Activated CD4-positive, alpha-beta memory T cell treated with anti-CD3 and anti-CD28 coated beads, Interleukin-2, amount 10 ng/mL, durations not matched to agents 7 days and 5 days (primary cell): ENCODE measurements at regions of chr17 and their contacts with region 1.

Region 1: GRCh38 chr17:45640141-45640850 is 143.8 kb upstream of the CRHR1 start:
- DNase-seq: peak; percentile 76
- H3K4me3 Mint-ChIP-seq: no peak overlapping the region
- H3K27ac Mint-ChIP-seq: no peak overlapping the region
- H3K4me1 Mint-ChIP-seq: peaks cover 11% of the 10 kb centered on the region
- H3K27me3 Mint-ChIP-seq: no peaks in the 10 kb centered on the region

Region 2: DNA sequence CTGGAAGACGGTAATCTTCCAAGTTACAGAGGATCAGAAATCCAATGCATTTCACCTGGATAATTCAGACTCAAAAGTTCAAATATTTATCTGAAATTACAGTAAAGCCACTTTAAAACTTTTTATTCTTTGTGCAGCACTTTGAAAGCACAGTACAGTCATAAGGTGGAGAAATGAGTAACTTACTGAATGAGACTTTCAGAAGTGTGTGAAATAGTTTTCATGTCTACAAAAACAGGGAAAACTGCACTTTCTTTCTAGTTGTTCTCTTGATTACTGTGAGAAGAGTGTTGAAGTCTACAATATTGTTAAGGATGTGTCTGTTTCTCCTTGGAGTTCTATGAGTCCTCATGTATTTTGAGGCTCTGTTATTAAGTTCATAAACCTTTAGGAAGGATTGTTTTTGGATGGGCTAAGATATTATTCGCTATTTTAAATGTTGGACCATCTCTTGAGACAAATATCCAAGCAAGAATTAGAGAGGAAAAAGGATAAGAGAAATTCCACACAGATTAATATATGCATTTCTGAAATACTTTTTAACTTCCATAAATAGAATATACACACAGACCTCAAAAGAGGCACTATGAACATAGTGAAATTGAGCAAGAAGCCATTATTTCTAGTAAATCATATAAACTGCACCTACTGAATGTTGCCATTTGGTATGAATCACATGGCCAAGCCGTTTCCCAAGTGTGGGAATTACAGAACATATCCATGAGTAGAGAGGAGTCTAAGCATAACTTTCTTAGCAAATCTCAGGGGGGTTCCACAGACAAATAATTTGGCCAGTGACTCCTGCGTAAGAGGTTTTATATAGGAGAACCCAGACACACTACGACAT is 66.1 kb before region 1 on chr17:
- CTCF ChIA-PET with region 1: no interaction called
- POLR2A ChIA-PET with region 1: no interaction called
- DNase-seq: no peak
- H3K4me3 Mint-ChIP-seq: no peak overlapping the region
- H3K27ac Mint-ChIP-seq: no peak overlapping the region
- H3K4me1 Mint-ChIP-seq: peaks cover 17% of the 10 kb centered on the region
- H3K27me3 Mint-ChIP-seq: no peaks in the 10 kb centered on the region

Region 3: DNA sequence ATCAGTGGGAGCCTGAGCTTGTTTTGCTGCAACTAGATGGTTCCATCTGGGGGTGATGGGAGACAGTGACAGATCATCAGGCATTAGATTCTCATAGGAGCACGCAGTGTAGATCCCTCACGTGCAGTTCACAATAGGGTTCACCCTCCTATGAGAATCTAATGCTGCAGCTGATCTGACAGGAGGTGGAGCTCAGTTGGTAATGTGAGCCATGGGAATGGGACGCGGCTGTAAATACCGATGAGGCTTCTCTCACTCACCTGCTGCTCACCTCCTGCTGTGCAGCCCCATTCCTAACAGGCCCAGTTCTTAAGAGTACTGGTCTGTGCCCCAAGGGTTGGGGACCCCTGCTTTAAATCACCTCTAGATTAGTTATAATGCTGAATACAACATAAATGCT is 12.3 kb before region 1 on chr17:
- CTCF ChIA-PET with region 1: interaction called, 13 read pairs
- POLR2A ChIA-PET with region 1: interaction called, 6 read pairs
- DNase-seq: no peak
- H3K4me3 Mint-ChIP-seq: no peak overlapping the region
- H3K27ac Mint-ChIP-seq: no peak overlapping the region
- H3K4me1 Mint-ChIP-seq: peaks cover 5% of the 10 kb centered on the region
- H3K27me3 Mint-ChIP-seq: no peaks in the 10 kb centered on the region

Region 4: GRCh38 chr17:45828628-45829027 is 188.3 kb after region 1 on chr17:
- CTCF ChIA-PET with region 1: interaction called, 56 read pairs
- POLR2A ChIA-PET with region 1: interaction called, 4 read pairs
- DNase-seq: no peak
- H3K4me3 Mint-ChIP-seq: no peak overlapping the region
- H3K27ac Mint-ChIP-seq: no peak overlapping the region
- H3K4me1 Mint-ChIP-seq: no peaks in the 10 kb centered on the region
- H3K27me3 Mint-ChIP-seq: no peaks in the 10 kb centered on the region

Region 5: GRCh38 chr17:45836047-45837044 is 196.1 kb after region 1 on chr17:
- CTCF ChIA-PET with region 1: interaction called, 56 read pairs
- POLR2A ChIA-PET with region 1: interaction called, 4 read pairs
- DNase-seq: no peak
- H3K4me3 Mint-ChIP-seq: no peak overlapping the region
- H3K27ac Mint-ChIP-seq: no peak overlapping the region
- H3K4me1 Mint-ChIP-seq: no peaks in the 10 kb centered on the region
- H3K27me3 Mint-ChIP-seq: peaks cover 11% of the 10 kb centered on the region

Region 6: GRCh38 chr17:45852535-45853297 is 212.4 kb after region 1 on chr17:
- CTCF ChIA-PET with region 1: interaction called, 10 read pairs
- POLR2A ChIA-PET with region 1: no interaction called
- DNase-seq: peak; percentile 57
- H3K4me3 Mint-ChIP-seq: no peak overlapping the region
- H3K27ac Mint-ChIP-seq: no peak overlapping the region
- H3K4me1 Mint-ChIP-seq: no peaks in the 10 kb centered on the region
- H3K27me3 Mint-ChIP-seq: peaks cover 18% of the 10 kb centered on the region